ENCODE measurements at regions of chr1 and their contacts with region 1.

Region 1: DNA sequence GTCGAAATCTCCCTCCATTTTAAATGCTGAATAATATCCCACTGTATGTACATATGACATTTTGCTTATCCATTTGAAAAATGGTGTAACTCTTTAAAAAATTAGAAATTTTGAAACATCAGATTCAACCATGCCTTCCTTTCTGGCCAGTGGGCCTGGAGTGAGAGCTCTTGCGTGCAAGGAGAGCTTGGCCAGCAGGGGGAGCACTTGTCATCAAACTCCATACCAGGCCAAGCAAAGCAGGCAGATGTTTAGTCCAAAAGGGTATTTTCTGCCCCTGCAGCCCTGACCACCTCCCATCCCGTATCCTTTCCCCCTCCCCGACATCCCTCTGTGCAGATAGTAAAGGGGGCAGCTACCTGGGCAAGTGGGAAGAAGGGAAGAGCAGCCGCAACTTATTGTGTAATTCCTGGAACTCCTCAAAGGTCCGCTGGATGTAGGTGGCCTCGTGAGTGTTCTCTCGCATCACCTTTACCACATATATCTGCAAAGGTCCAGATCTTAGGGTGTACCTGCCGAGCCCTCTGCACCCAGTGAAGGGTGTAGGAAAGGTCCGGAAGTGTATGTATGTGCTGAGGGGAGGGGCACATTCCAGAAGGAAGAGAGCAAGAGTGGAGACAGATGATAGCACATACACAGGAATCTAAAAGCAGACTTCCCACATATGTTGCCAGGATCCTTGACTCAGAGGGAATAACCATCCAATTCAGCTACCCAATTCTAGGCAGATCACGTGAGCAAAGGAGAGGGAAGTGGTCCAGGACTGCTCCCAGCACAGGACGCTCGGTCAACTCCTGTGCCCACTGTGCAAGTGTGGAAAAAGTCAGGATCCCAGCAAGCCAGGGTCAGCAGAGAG is 19.9 kb upstream of the PPP1R15B start:
- DNase-seq: peak; percentile 83
- H3K4me3 ChIP-seq: peak overlapping the region in 1 of 2 experiments; percentile 39; a peak in 1 of 4 replicates
- H3K27ac ChIP-seq: peak overlapping the region in 1 of 2 experiments; percentile 26; a peak in 1 of 4 replicates
- H3K4me1 ChIP-seq: peaks cover 0 to 7% of the 10 kb centered on the region in 2 experiments; a peak in 2 of 4 replicates
- H3K27me3 ChIP-seq: no peaks in the 10 kb centered on the region
- CTCF ChIP-seq: peak; percentile 96
- EP300 ChIP-seq: no peak
- RAD21 ChIP-seq: peak; percentile 77

Region 2: DNA sequence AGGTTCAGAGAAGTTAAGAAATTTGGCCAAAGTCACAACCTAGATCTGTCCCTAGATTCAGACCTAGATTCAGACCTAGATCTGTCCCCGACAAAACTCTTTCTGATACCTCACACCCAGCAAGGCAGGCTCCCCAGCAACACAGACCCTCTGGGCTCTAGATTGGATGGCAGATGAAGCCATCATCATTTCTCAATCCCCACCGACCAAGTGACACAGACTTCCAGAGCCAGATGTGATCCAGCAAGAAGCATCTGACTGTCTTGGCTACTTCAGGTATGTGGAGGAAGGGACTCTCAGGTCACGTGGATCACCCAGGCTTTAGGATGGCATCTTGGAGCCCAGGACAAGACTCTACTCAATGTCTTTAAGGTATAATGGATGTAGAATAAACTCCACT is 59.4 kb before region 1 on chr1:
- CTCF ChIA-PET with region 1: no interaction called
- POLR2A ChIA-PET with region 1: no interaction called
- DNase-seq: no peak
- H3K4me3 ChIP-seq: no peak overlapping the region
- H3K27ac ChIP-seq: no peak overlapping the region
- H3K4me1 ChIP-seq: peaks cover 0 to 6% of the 10 kb centered on the region in 2 experiments; a peak in 1 of 4 replicates
- H3K27me3 ChIP-seq: peaks cover 46% of the 10 kb centered on the region; the same call in 1 of the 2 replicates
- CTCF ChIP-seq: no peak
- EP300 ChIP-seq: no peak
- RAD21 ChIP-seq: no peak

Region 3: DNA sequence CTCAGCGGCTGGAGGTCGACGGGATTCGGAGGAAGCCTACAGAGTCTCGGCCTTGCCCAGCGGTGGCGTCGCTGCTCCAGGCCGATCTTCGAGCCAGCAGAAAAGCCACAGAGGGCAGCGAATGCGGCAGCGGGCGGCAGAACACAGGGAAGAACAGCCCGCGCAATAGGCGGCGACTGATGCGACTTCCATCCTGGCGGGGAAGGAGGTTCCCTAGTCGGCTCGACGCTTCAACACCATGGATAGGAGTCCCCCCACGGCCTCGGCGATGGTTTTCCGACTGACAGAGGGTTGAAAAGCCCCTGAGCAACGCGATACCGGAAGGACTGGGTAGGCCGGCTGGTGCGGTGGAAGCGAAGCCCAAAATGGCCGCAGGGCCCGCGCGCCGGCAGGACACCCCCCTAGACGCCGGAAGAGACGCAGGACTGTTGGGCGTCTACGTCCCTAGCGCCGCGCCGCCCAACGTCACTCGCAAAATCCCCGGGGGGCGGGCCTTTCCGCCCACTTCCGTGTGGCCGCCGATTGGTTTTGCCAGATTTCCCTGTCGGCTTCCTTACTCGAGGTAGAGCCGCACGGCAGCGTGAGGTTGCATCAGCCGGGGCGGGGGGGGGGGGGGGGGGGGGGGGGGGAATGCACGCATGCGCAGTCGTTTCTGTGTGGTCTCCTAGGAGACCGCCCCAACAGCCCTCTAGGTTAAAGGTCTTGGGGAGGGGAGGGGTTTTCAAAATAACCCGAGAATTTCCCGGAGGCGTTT is 19.9 kb before region 1 on chr1 and contains the start of gene PPP1R15B:
- CTCF ChIA-PET with region 1: interaction called, 18 read pairs
- POLR2A ChIA-PET with region 1: no interaction called
- DNase-seq: peak; percentile 93
- H3K4me3 ChIP-seq: peak within 1 kb of the TSS; percentile 78 to 89
- H3K27ac ChIP-seq: peak within 1 kb of the TSS; percentile 97 to 98
- H3K4me1 ChIP-seq: peaks cover 0 to 14% of the 10 kb centered on the region in 2 experiments; a peak in 2 of 4 replicates
- H3K27me3 ChIP-seq: no peaks in the 10 kb centered on the region
- CTCF ChIP-seq: no peak
- EP300 ChIP-seq: no peak; a peak in 1 of 4 replicates
- RAD21 ChIP-seq: no peak
- polyA plus RNA-seq, gene PPP1R15B: 12.1 and 14.3 TPM in 2 replicates

Region 4: DNA sequence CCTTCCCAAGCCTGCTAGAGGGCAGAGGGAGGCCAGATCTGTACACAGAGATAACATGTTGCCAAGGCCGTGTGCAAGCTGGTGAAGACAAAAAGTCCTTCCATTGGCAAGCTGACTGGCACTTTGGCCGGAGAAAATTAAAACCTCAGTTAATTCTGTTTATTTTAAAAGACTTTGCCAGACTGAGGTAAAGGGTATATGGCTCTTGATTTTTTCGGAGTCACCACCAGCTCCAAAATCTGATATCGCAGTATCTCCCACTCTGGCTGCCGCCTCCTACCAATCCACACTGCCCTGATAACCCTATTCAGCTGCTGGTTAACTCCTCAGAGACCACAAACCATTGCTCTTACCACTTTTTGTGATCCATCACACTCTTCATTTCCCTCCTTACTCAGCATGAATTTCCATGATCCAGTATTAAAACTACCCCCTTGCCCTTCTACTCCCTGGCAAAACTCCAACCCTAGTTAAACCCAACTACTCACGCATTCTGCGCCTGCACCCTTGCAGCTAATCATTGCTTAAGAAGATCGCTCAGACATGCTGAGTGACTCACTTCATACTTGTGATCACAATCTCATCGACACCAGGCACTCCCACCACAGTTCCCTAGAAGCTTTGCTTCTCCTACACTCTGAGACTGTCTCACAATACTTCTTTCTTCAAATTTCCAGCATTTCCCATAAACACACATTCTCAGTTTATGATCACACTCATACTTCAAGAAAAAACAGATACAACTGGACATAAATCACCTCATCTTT is 14.1 kb before region 1 on chr1:
- CTCF ChIA-PET with region 1: interaction called, 23 read pairs
- POLR2A ChIA-PET with region 1: no interaction called
- DNase-seq: peak; percentile 65
- H3K4me3 ChIP-seq: peak overlapping the region; percentile 26 to 48; a peak in 3 of 4 replicates
- H3K27ac ChIP-seq: peak overlapping the region; percentile 90 to 99
- H3K4me1 ChIP-seq: peaks cover 10 to 29% of the 10 kb centered on the region in 2 experiments; a peak in 3 of 4 replicates
- H3K27me3 ChIP-seq: no peaks in the 10 kb centered on the region
- CTCF ChIP-seq: no peak
- EP300 ChIP-seq: peak; percentile 17 to 82; a peak in 3 of 4 replicates
- RAD21 ChIP-seq: no peak

Region 5: DNA sequence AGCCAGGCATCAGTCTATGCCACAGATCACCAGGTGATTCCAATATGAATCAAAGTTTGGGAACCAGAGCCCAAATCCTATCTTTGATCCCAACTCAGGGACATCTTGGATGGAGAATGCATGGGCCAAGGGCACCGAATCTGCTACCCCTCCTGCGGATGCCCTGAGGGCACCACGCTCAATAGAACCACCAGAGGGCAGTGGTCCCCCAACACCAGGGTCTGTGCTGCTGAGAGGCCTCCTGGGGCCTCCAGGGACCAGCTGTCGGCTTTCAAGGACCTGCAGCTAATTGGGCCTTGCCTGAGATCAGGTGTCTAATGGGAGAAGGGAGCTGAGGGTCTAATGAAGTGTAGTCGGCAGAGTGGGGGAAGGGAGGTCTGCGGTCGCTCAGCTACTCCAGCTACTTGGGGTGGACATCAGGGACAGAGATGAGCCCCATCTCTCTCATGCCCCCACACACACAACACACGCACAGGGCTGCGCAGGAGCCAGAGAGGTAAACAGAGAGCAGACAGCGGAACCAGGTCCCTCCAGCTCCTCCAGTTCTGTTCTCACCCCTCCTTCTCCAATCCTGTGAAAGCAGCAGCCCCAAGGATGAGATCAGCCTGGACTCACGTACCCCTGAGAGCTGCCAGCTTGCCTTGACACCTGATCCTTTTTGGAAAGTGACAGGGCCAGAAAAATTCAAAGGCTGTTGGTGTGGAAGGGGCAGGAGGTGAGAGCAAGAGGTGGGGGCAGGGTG is 15.0 kb after region 1 on chr1:
- CTCF ChIA-PET with region 1: interaction called, 132 read pairs
- POLR2A ChIA-PET with region 1: no interaction called
- DNase-seq: peak; percentile 82
- H3K4me3 ChIP-seq: no peak overlapping the region; a peak in 1 of 4 replicates
- H3K27ac ChIP-seq: no peak overlapping the region
- H3K4me1 ChIP-seq: no peaks in the 10 kb centered on the region; a peak in 1 of 4 replicates
- H3K27me3 ChIP-seq: no peaks in the 10 kb centered on the region
- CTCF ChIP-seq: peak; percentile 74
- EP300 ChIP-seq: no peak
- RAD21 ChIP-seq: peak; percentile 72

Region 6: DNA sequence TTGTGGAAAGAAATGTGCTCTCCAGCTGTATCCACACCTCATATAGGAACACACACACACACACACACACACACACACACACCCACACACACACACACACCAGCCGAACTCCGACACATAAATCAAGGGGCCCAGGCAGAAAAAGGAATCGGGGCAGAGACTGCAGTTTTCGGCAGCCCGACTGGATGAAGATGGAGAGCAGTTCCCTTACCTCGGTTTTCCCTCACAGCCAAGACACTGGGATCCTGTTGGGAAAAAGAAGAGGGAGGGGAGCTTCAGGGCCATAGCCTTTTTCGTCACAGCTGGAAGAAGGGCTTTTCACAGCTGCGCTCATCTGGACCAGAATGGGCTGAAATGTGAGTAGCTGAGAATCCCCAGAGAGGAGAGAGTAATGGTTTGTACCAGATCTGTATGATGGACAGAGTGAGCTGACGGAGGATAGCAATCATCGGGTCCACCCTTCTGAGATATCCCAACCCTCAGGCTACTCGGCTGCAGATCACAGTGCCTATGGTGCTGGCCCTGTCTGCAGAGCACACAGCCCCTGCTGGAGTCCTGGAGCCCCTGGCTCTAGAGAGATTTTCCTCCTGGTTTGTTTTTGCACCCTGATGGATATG is 25.4 kb after region 1 on chr1:
- CTCF ChIA-PET with region 1: interaction called, 21 read pairs
- POLR2A ChIA-PET with region 1: no interaction called
- DNase-seq: no peak
- H3K4me3 ChIP-seq: no peak overlapping the region
- H3K27ac ChIP-seq: no peak overlapping the region
- H3K4me1 ChIP-seq: no peaks in the 10 kb centered on the region; a peak in 1 of 4 replicates
- H3K27me3 ChIP-seq: no peaks in the 10 kb centered on the region
- CTCF ChIP-seq: no peak
- EP300 ChIP-seq: no peak
- RAD21 ChIP-seq: no peak

Region 7: DNA sequence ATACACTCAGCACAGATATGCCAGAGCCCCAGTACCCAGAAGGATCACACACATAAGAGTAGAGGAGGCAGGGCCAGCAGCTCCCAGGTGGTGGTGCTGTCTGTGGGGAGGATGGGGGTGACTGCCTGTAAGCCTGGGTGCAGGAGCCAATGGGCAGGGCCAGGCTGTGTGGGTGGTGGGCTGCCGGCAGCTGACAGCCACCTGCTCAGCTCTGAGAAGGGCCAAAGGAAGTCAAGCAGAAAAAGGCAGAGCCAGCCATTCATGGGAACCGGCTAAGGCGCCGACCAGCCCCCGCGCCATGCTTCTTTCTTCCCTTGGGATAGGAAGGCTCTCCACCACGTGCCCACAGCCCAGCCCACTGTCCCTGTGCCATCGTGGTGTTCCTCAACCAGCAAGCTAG is 49.0 kb after region 1 on chr1:
- CTCF ChIA-PET with region 1: interaction called, 1,005 read pairs
- POLR2A ChIA-PET with region 1: no interaction called
- DNase-seq: no peak
- H3K4me3 ChIP-seq: no peak overlapping the region
- H3K27ac ChIP-seq: no peak overlapping the region
- H3K4me1 ChIP-seq: peaks cover 0 to 13% of the 10 kb centered on the region in 2 experiments; a peak in 3 of 4 replicates
- H3K27me3 ChIP-seq: no peaks in the 10 kb centered on the region
- CTCF ChIP-seq: no peak
- EP300 ChIP-seq: no peak
- RAD21 ChIP-seq: no peak

Region 8: GRCh38 chr1:204516180-204516879 is 84.8 kb after region 1 on chr1 and contains the start of gene MDM4:
- CTCF ChIA-PET with region 1: interaction called, 15 read pairs
- POLR2A ChIA-PET with region 1: interaction called, 3 read pairs
- DNase-seq: peak; percentile 92
- H3K4me3 ChIP-seq: peak within 1 kb of the TSS; percentile 61 to 73
- H3K27ac ChIP-seq: peak within 1 kb of the TSS; percentile 90
- H3K4me1 ChIP-seq: peaks cover 4 to 8% of the 10 kb centered on the region in 2 experiments; a peak in 1 of 4 replicates
- H3K27me3 ChIP-seq: no peaks in the 10 kb centered on the region
- CTCF ChIP-seq: no peak
- EP300 ChIP-seq: 0 out of 4 replicates have a peak, but pooled peaks of 1 of the 2 experiments have one; percentile 24
- RAD21 ChIP-seq: no peak
- polyA plus RNA-seq, gene MDM4: 6.2 and 9.2 TPM in 2 replicates